Transverse colon (tissue), 4 donors: ENCODE measurements at regions of chr12 and their contacts with region 1.

Region 1: GRCh38 chr12:66169221-66170170 is at the start of gene TMBIM4:
- DNase-seq: peak; percentile 91
- H3K4me3 ChIP-seq: peak within 1 kb of the TSS; percentile 64 to 93 (median 82)
- H3K27ac ChIP-seq: peak within 1 kb of the TSS; percentile 98 to 100 (median 98)
- H3K4me1 ChIP-seq: peaks cover 0 to 20% (median 15%) of the 10 kb centered on the region in 4 donors
- H3K27me3 ChIP-seq: no peaks in the 10 kb centered on the region
- CTCF ChIP-seq: peak; percentile 49 to 92 (median 64)
- EP300 ChIP-seq: no peak
- POLR2A ChIP-seq: peak; percentile 76
- total RNA-seq, gene TMBIM4: 15.5 to 217 (median 98.8) TPM

Region 2: DNA sequence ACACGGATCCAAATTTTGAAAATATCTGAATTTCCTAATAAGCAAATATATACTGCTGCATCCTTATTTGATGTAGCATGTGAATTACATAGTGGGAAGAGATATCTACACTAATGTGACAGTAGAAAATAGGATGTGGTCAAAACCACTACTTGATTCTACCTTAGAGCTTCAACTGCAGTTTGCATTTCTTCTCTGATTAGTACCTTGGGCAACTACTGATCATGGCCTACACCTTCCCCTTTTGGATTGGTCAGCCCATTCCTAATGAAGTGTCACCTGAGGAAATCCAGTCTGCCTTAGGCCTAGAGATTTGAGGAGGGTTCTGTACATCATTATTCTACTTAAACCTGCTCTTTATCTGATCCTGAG is 49.6 kb before region 1 on chr12:
- in situ Hi-C with region 1: no loop called
- intact Hi-C with region 1: loop called (anchors 1 kb)
- DNase-seq: no peak
- H3K4me3 ChIP-seq: no peak overlapping the region
- H3K27ac ChIP-seq: no peak overlapping the region
- H3K4me1 ChIP-seq: no peaks in the 10 kb centered on the region
- H3K27me3 ChIP-seq: no peaks in the 10 kb centered on the region
- CTCF ChIP-seq: no peak
- EP300 ChIP-seq: no peak
- POLR2A ChIP-seq: no peak